ENCODE measurements at regions of chr20 and their contacts with region 1.

Region 1: DNA sequence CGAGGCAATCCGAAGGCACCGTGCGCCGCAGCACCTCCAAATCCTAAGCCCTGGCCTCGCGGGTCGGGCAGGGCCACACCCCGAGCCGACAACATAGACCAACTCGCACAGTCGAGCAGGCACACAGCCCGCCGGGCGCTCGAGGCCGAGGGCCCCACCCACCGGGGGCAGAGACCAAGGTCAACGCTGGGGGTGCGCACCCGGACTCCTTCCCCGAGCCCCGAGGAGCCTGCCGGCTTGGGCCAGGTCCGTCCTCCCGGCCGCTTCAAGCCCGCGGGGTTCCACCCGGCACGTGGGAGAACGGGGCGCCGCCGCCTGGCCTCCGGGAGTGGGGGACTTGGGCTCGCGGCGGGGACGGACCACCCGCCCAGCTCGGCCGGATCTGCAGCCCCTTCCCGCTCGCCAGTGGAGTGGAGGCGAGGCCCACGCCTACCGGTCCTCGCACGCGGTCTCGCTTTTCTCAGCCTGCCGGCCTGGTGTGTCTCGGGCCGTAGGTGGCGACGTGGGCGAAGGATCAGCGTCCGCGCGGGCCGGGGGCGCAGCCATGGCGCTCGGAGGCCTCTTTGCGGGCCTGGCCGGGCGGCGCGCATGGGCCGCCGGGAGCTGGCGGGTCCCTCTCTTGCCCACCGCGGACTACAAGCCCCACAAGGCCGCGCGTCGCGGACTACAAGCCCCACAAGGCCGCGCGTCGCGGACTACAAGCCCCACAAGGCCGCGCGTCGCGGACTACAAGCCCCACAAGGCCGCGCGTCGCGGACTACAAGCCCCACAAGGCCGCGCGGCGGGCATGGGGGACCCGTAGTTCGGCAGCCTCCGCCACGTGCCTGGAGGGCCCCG is at the start of gene UCKL1:
- DNase-seq: peak; percentile 91
- ATAC-seq: peak; percentile 80
- H3K4me3 ChIP-seq: peak within 1 kb of the TSS; percentile 92 to 100 (median 99)
- H3K27ac ChIP-seq: peak within 1 kb of the TSS; percentile 99
- H3K4me1 ChIP-seq: peaks cover 66% of the 10 kb centered on the region
- H3K27me3 ChIP-seq: no peaks in the 10 kb centered on the region
- CTCF ChIP-seq: peak; percentile 19; the same call in 1 of the 2 replicates
- EP300 ChIP-seq: peak in 1 of 2 experiments; percentile 79; a peak in 3 of 4 replicates
- POLR2A ChIP-seq: peak in 1 of 2 experiments; percentile 96; a peak in 2 of 4 replicates
- RAD21 ChIP-seq: peak; percentile 77
- total RNA-seq, gene UCKL1: 48.0 and 50.2 TPM in 2 replicates

Region 2: DNA sequence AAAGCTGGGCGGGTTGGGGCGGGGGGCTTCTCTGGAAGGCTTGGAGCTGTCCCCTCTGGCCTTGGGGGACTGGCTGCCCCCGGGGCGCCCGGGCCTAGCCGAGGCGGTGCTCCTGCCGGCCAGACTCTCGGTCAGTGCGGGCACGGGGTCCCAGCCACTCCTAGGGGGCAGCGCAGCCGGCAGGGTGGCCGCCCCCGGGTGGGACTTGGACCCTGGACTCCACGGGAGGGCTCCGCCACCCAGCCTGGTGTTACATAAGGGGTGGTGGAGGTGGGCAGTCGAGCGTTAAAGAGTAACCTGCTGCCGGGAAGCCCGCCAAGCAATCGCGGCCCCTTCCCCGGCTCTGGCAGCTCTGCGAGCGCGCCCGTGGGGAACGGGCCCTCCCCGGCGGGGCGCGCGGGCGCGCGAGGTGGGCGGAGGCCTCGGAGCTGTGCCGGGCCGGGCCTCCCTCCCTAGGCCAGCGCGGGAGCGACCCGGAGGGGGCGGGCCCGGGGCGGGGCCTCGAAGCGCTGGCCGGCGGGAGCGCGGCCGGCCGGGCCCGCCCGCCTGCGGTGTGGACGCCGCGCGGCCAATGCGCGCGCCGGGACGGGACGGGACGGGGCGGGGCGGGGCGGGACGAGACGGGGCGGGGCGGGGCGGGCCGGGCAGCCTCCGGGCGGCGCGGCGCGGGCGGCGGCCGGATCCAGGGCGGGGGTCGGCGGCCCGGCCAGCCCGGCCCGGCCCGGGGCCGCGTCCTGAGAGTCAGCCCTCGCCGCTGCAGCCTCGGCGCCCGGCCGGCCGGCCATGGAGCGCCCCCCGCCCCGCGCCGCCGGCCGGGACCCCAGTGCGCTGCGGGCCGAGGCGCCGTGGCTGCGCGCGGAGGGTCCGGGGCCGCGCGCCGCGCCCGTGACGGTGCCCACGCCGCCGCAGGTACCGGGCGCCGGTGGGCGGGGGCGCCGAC is 216.6 kb before region 1 on chr20 and contains the start of gene SLC2A4RG:
- CTCF ChIA-PET with region 1: no interaction called
- POLR2A ChIA-PET with region 1: interaction called, 20 read pairs
- in situ Hi-C with region 1: no loop called
- intact Hi-C with region 1: no loop called
- DNase-seq: peak; percentile 94
- ATAC-seq: peak; percentile 15
- H3K4me3 ChIP-seq: peak within 1 kb of the TSS; percentile 74 to 93 (median 85)
- H3K27ac ChIP-seq: peak within 1 kb of the TSS; percentile 93
- H3K4me1 ChIP-seq: peaks cover 64% of the 10 kb centered on the region
- H3K27me3 ChIP-seq: no peaks in the 10 kb centered on the region
- CTCF ChIP-seq: peak; percentile 54
- EP300 ChIP-seq: peak; percentile 36 to 77; a peak in 3 of 4 replicates
- POLR2A ChIP-seq: peak in 1 of 2 experiments; percentile 54; a peak in 2 of 4 replicates
- RAD21 ChIP-seq: peak; percentile 76
- total RNA-seq, gene SLC2A4RG: 47.4 and 91.4 TPM in 2 replicates

Region 3: GRCh38 chr20:63791497-63792156 is 164.4 kb before region 1 on chr20:
- CTCF ChIA-PET with region 1: no interaction called
- POLR2A ChIA-PET with region 1: no interaction called
- in situ Hi-C with region 1: no loop called
- intact Hi-C with region 1: no loop called
- DNase-seq: no peak
- ATAC-seq: peak; percentile 25
- H3K4me3 ChIP-seq: peak overlapping the region in 1 of 3 experiments; percentile 43; a peak in 2 of 6 replicates
- H3K27ac ChIP-seq: peak overlapping the region; percentile 15
- H3K4me1 ChIP-seq: peaks cover 45% of the 10 kb centered on the region
- H3K27me3 ChIP-seq: no peaks in the 10 kb centered on the region
- CTCF ChIP-seq: no peak
- EP300 ChIP-seq: no peak
- POLR2A ChIP-seq: no peak
- RAD21 ChIP-seq: no peak

Region 4: GRCh38 chr20:63894358-63895201 is 61.5 kb before region 1 on chr20 and contains the start of gene DNAJC5:
- CTCF ChIA-PET with region 1: no interaction called
- POLR2A ChIA-PET with region 1: interaction called, 29 read pairs
- in situ Hi-C with region 1: no loop called
- intact Hi-C with region 1: no loop called
- DNase-seq: peak; percentile 95
- ATAC-seq: peak; percentile 82
- H3K4me3 ChIP-seq: peak within 1 kb of the TSS; percentile 73 to 82 (median 77)
- H3K27ac ChIP-seq: peak within 1 kb of the TSS; percentile 60
- H3K4me1 ChIP-seq: peaks cover 39% of the 10 kb centered on the region
- H3K27me3 ChIP-seq: no peaks in the 10 kb centered on the region; a peak in 1 of 5 replicates
- CTCF ChIP-seq: no peak
- EP300 ChIP-seq: peak in 1 of 2 experiments; percentile 49; a peak in 1 of 4 replicates
- POLR2A ChIP-seq: peak; percentile 76 to 87
- RAD21 ChIP-seq: 0 out of 2 replicates have a peak, but pooled peaks have one; percentile 56
- total RNA-seq, gene DNAJC5: 54.3 and 64.5 TPM in 2 replicates

Region 5: GRCh38 chr20:63942250-63942959 is 13.6 kb before region 1 on chr20:
- CTCF ChIA-PET with region 1: no interaction called
- POLR2A ChIA-PET with region 1: interaction called, 11 read pairs
- in situ Hi-C with region 1: no loop called
- intact Hi-C with region 1: no loop called
- DNase-seq: no peak
- ATAC-seq: no peak; the same call in 2 of the 3 replicates
- H3K4me3 ChIP-seq: no peak overlapping the region
- H3K27ac ChIP-seq: peak overlapping the region; percentile 11
- H3K4me1 ChIP-seq: no peaks in the 10 kb centered on the region
- H3K27me3 ChIP-seq: no peaks in the 10 kb centered on the region
- CTCF ChIP-seq: no peak
- EP300 ChIP-seq: no peak
- POLR2A ChIP-seq: peak in 1 of 2 experiments; percentile 23; a peak in 2 of 4 replicates
- RAD21 ChIP-seq: no peak

Region 6: DNA sequence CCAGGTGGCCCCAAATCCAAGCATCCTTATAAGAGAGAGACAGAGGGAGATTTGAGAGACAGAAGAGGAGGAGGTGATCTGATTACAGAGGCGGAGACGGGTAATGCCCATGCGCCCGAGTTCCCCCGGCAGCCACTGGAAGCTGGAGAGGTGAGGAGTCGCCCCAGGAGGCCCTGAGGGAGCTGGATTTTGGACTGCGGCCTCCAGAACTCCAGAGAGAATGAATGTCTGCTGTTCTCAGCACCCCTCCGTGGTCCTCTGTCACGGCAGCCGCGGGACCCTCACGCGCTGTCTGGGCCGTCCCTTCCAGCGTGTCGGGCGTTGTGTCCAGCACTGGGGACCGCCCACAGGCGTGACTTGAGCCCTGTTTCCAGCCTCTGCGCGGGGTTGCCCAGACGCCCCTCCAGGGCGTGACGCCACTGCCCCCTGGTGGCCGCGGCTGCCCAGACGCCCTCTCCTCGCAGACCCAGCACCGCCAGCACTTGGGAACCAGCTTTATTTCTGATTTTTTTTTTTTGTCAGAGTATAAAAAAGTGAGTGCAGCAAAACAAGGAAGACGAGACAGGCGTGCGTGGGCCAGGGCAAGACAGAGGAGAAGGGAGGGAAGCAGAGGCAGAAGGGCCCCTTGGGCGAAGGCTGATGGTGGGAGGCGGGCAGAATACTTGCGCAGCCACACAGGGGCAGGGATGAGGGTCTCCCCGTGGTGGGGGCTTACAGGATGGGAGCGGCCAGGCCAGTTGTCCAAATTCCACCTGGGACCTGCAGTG is 17.8 kb after region 1 on chr20:
- CTCF ChIA-PET with region 1: interaction called, 4 read pairs
- POLR2A ChIA-PET with region 1: interaction called, 78 read pairs
- in situ Hi-C with region 1: no loop called
- intact Hi-C with region 1: loop called (anchors 1 kb)
- DNase-seq: peak; percentile 86
- ATAC-seq: peak; percentile 74
- H3K4me3 ChIP-seq: peak overlapping the region; percentile 43 to 75 (median 61); a peak in 5 of 6 replicates
- H3K27ac ChIP-seq: peak overlapping the region; percentile 13
- H3K4me1 ChIP-seq: peaks cover 54% of the 10 kb centered on the region
- H3K27me3 ChIP-seq: no peaks in the 10 kb centered on the region
- CTCF ChIP-seq: peak; percentile 100
- EP300 ChIP-seq: peak in 1 of 2 experiments; percentile 52; a peak in 1 of 4 replicates
- POLR2A ChIP-seq: no peak; a peak in 2 of 4 replicates
- RAD21 ChIP-seq: peak; percentile 99

Region 7: DNA sequence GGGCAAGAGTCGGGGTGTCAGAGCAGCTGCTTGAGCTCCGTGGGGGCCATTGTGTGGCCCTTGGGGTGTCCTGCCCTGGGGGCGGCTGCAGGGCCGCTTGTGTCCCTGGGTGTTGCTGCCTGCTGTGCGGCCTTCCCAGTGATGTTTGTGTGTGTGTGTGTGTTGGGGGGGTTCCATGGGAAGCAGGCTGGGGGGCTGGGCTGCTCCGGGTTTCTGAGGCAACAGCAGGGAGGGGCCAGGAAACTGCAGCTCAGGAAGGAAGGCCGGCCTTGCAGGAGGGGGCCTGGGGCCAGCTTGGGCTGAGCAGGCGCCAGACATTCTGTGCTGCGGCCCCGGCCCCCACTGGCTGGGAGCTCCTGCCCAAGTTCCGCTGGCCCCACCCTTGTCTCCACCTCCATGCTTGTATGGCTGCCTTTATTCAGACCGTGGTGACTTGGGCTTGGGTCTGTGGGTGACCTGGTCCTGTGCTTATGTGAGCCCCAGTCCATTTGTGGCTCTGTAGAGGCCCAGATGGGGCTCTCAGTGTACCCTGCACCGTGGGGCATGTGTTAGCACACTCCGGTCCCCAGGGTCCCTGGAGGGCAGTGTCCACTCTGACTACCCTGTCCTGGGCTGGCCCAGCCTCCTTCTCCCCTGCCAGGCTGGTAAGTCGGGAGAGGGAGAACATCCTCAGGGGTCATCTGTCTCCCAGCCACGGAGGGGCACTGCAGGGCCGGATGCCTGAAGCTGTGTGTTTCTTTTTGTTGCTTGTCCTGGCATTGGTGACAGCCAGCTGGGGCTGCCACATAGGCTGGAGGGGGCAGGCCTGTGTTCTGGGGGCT is 98.0 kb after region 1 on chr20:
- CTCF ChIA-PET with region 1: interaction called, 3 read pairs
- POLR2A ChIA-PET with region 1: interaction called, 12 read pairs
- in situ Hi-C with region 1: no loop called
- intact Hi-C with region 1: no loop called
- DNase-seq: peak; percentile 94
- ATAC-seq: peak; percentile 41
- H3K4me3 ChIP-seq: peak overlapping the region; percentile 45 to 69 (median 46)
- H3K27ac ChIP-seq: peak overlapping the region; percentile 77
- H3K4me1 ChIP-seq: peaks cover 87% of the 10 kb centered on the region
- H3K27me3 ChIP-seq: no peaks in the 10 kb centered on the region; a peak in 1 of 5 replicates
- CTCF ChIP-seq: peak; percentile 91
- EP300 ChIP-seq: peak; percentile 49 to 61; a peak in 3 of 4 replicates
- POLR2A ChIP-seq: peak in 1 of 2 experiments; percentile 65; a peak in 2 of 4 replicates
- RAD21 ChIP-seq: peak; percentile 87

Region 8: DNA sequence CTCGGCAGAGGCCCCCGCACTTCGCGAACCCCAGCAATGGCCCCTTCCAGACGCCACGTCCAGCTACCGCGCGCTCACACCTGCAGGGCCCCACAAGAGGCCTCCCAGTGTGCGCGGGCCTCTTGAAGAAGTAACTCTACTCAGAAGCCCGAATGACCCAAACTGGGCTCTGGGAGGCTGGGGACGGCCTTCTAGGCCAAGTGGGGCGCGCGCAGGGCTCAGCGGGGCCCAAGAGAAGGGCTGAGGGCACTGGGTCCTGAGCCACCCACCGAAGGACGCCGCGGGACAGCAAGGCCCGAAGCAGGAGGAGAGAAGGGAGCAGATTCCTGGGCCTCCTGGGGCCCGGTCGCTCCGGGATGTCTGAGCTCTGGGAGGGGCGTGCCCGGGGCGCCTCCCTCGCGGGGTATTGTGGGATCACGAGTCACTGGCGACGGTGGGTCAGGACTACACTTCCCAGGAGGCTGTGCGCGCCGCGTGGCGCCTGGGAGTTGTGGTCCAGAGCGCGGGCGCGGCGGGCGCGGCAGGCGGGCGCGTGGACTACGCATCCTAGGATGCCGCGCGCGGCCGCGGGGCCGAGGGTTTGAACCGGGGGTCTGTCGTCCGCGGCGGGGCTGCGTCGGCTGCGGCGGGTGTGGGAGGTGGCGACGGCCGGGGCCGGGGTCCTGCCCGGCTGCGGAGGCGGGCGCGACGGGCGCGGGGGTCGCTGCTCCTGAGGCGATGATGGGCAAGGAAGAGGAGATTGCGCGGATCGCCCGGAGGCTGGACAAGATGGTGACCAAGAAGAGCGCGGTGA is 106.7 kb after region 1 on chr20 and contains the start of gene TCEA2:
- CTCF ChIA-PET with region 1: interaction called, 3 read pairs
- POLR2A ChIA-PET with region 1: interaction called, 18 read pairs
- in situ Hi-C with region 1: no loop called
- intact Hi-C with region 1: no loop called
- DNase-seq: peak; percentile 96
- ATAC-seq: peak; percentile 76
- H3K4me3 ChIP-seq: peak within 1 kb of the TSS; percentile 82 to 98 (median 90)
- H3K27ac ChIP-seq: peak within 1 kb of the TSS; percentile 78
- H3K4me1 ChIP-seq: peaks cover 65% of the 10 kb centered on the region
- H3K27me3 ChIP-seq: peaks cover 0 to 3% of the 10 kb centered on the region in 2 experiments; a peak in 2 of 5 replicates
- CTCF ChIP-seq: peak; percentile 32; the same call in 1 of the 2 replicates
- EP300 ChIP-seq: peak in 1 of 2 experiments; percentile 10; a peak in 1 of 4 replicates
- POLR2A ChIP-seq: peak in 1 of 2 experiments; percentile 81; a peak in 2 of 4 replicates
- RAD21 ChIP-seq: peak; percentile 40; the same call in 1 of the 2 replicates
- total RNA-seq, gene TCEA2: 25.9 and 33.7 TPM in 2 replicates